Mammary epithelial cell (primary cell): ENCODE measurements at regions of chr9 and their contacts with region 1.

Region 1: GRCh38 chr9:37036776-37037502 is 2.9 kb upstream of the PAX5 start:
- DNase-seq: no peak
- H3K4me3 ChIP-seq: peak overlapping the region; percentile 34 to 45 (median 34)
- H3K27ac ChIP-seq: no peak overlapping the region
- H3K4me1 ChIP-seq: peaks cover 24% of the 10 kb centered on the region
- H3K27me3 ChIP-seq: peaks cover 68% of the 10 kb centered on the region
- CTCF ChIP-seq: no peak

Region 2: DNA sequence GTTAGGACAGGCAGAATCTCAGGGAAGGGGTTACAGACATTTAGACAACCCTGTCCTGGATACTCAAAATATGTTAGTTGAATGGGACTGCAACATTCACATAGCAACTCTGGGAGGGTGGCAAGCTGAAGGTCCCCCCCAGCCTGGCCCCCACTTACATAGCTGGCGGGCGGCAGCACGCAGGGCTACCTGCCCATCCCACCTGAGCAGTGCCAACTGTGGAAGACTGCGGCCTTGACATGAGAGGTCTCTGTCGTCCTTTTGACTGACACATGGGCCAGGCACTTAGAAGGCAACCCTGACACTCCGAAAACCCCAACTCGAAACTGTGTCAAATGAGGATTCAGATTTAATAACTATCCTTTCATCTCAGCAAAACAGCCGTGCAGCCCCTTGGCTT is 19.4 kb before region 1 on chr9:
- CTCF ChIA-PET with region 1: interaction called, 12 read pairs
- dilution Hi-C with region 1: no loop called
- in situ Hi-C with region 1: no loop called
- intact Hi-C with region 1: no loop called
- DNase-seq: no peak
- H3K4me3 ChIP-seq: no peak overlapping the region
- H3K27ac ChIP-seq: no peak overlapping the region
- H3K4me1 ChIP-seq: no peaks in the 10 kb centered on the region
- H3K27me3 ChIP-seq: peaks cover 15% of the 10 kb centered on the region
- CTCF ChIP-seq: no peak

Region 3: DNA sequence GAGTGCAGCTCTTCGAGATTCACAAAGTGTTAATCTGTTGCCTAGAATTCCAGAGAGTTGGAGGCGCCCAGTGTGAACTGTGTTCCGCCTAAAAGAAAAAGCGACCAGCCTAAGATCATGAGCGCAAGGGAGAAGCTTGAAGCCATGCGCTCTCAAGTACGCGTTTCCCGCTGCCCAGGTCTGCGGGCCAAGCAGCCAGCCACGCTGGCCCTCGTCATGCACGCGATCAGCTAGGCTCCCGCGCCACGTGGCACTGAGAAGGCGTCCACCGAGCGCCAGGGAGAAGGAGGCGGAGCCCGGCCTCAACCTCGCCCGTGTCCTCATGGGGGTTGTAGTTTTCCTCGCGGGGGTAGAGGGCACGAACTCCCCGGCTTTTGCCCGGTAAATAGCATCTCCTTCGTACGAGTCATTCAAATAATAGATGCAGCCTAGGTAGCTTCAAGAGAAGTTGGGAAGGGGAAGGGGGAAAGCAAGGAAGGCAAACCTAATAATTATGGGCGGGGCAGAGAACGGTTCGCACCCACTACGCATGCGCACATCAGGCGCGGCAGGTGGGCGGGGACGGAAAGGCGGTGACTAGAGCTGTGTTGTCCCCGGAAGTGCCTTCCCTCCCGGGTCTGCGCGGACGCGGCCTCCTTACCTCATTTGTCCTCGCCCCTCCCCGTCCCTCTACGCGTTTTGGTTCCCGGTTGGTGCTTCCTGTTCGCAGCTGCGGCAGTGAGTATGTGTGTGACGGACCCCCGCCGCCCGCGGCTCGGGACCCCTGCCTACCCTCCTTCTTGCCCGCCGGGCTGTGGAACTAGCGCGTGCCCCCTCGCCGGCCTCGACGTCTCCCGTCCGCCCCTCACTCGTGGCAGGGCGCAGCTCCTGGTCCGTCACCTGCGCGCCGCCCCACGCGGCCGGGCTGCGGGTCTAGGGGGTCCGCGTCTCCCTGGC is 83.2 kb after region 1 on chr9 and contains the start of gene ZCCHC7:
- CTCF ChIA-PET with region 1: no interaction called
- dilution Hi-C with region 1: no loop called
- in situ Hi-C with region 1: no loop called
- intact Hi-C with region 1: loop called (anchors 2 kb)
- DNase-seq: peak; percentile 92
- H3K4me3 ChIP-seq: peak within 1 kb of the TSS; percentile 69 to 99 (median 93)
- H3K27ac ChIP-seq: peak within 1 kb of the TSS; percentile 84
- H3K4me1 ChIP-seq: peaks cover 9% of the 10 kb centered on the region
- H3K27me3 ChIP-seq: no peaks in the 10 kb centered on the region
- CTCF ChIP-seq: no peak
- total RNA-seq, gene ZCCHC7: 15.8 to 25.5 TPM